MCF 10A (cell line): ENCODE measurements at regions of chr1 and their contacts with region 1.

Region 1: DNA sequence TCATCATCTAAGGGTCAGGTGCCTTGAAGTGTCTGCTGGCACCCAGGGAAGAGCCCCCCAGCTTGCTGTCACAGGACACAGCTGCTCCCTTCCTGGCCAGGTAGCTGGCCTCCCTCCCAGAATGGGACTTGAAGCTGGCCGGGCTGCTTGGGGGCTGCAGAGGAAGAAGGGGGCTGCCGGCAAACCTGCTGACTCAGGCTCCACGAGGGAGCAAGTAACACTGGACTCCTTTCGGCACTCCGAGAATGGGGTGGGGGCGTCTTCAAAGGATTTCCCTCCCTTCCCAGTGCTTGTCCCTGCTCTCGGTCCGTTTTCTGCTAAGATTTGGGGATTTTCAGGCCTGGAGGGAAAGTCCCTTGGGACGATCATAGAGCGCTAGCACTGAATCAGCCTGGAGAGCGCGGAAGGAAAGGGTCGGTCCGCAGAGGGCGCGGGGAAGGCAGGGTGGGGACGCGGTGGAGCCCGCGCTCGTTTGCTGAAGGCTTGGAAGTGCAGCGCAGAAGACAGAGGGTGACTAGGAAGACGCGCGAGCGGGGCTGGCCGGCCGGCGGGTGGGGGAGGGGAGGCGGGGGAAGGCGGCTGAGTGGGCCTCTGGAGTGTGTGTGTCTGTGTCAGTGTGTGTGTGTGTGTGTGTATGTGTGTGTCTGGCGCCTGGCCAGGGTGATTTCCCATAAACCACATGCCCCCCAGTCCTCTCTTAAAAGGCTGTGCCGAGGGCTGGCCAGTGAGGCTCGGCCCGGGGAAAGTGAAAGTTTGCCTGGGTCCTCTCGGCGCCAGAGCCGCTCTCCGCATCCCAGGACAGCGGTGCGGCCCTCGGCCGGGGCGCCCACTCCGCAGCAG is at the start of gene CSF1:
- DNase-seq: peak; percentile 72
- H3K4me3 Mint-ChIP-seq: peak within 1 kb of the TSS; percentile 73
- H3K27ac Mint-ChIP-seq: peak within 1 kb of the TSS; percentile 74
- H3K4me1 Mint-ChIP-seq: peaks cover 25% of the 10 kb centered on the region
- H3K27me3 Mint-ChIP-seq: no peaks in the 10 kb centered on the region
- CTCF ChIP-seq: no peak
- total RNA-seq, gene CSF1: 6.3 and 11.7 TPM in 2 replicates

Region 2: GRCh38 chr1:109790735-109791494 is 119.4 kb before region 1 on chr1:
- CTCF ChIA-PET with region 1: no interaction called
- POLR2A ChIA-PET with region 1: no interaction called
- intact Hi-C with region 1: loop called (anchors 5 kb)
- DNase-seq: no peak
- H3K4me3 Mint-ChIP-seq: no peak overlapping the region
- H3K27ac Mint-ChIP-seq: no peak overlapping the region
- H3K4me1 Mint-ChIP-seq: peaks cover 22% of the 10 kb centered on the region
- H3K27me3 Mint-ChIP-seq: no peaks in the 10 kb centered on the region
- CTCF ChIP-seq: no peak